ENCODE measurements at regions of chr12 and their contacts with region 1.

Region 1: GRCh38 chr12:121060149-121061001 is 21.3 kb upstream of the OASL start:
- DNase-seq: peak in 3 of 5 donors; percentile 37 to 50 (median 43)
- ATAC-seq: peak; percentile 65 to 95 (median 81)
- H3K4me3 ChIP-seq: peak overlapping the region in 10 of 12 donors; percentile 1 to 54 (median 40)
- H3K27ac ChIP-seq: peak overlapping the region; percentile 17 to 89 (median 70)
- H3K4me1 ChIP-seq: peaks cover 0 to 13% (median 3%) of the 10 kb centered on the region in 12 donors
- H3K27me3 ChIP-seq: no peaks in the 10 kb centered on the region
- CTCF ChIP-seq: peak; percentile 26 to 57 (median 44)
- POLR2A ChIP-seq: no peak

Region 2: GRCh38 chr12:120737557-120738251 is 322.7 kb before region 1 on chr12:
- intact Hi-C with region 1: no loop called
- DNase-seq: peak in 1 of 5 donors; percentile 21
- ATAC-seq: no peak
- H3K4me3 ChIP-seq: no peak overlapping the region
- H3K27ac ChIP-seq: no peak overlapping the region
- H3K4me1 ChIP-seq: no peaks in the 10 kb centered on the region
- H3K27me3 ChIP-seq: no peaks in the 10 kb centered on the region
- CTCF ChIP-seq: peak in 2 of 12 donors; percentile 13 to 21
- POLR2A ChIP-seq: no peak

Region 3: GRCh38 chr12:121095544-121096198 is 35.3 kb after region 1 on chr12:
- intact Hi-C with region 1: loop called (anchors 1 to 5 kb)
- DNase-seq: peak; percentile 51 to 89 (median 72)
- ATAC-seq: peak; percentile 58 to 94 (median 88)
- H3K4me3 ChIP-seq: peak overlapping the region in 10 of 12 donors; percentile 28 to 55 (median 42)
- H3K27ac ChIP-seq: peak overlapping the region in 1 of 12 donors; percentile 46
- H3K4me1 ChIP-seq: peaks cover 0 to 20% (median 9%) of the 10 kb centered on the region in 12 donors
- H3K27me3 ChIP-seq: no peaks in the 10 kb centered on the region
- CTCF ChIP-seq: peak; percentile 75 to 92 (median 85)
- POLR2A ChIP-seq: no peak

Region 4: DNA sequence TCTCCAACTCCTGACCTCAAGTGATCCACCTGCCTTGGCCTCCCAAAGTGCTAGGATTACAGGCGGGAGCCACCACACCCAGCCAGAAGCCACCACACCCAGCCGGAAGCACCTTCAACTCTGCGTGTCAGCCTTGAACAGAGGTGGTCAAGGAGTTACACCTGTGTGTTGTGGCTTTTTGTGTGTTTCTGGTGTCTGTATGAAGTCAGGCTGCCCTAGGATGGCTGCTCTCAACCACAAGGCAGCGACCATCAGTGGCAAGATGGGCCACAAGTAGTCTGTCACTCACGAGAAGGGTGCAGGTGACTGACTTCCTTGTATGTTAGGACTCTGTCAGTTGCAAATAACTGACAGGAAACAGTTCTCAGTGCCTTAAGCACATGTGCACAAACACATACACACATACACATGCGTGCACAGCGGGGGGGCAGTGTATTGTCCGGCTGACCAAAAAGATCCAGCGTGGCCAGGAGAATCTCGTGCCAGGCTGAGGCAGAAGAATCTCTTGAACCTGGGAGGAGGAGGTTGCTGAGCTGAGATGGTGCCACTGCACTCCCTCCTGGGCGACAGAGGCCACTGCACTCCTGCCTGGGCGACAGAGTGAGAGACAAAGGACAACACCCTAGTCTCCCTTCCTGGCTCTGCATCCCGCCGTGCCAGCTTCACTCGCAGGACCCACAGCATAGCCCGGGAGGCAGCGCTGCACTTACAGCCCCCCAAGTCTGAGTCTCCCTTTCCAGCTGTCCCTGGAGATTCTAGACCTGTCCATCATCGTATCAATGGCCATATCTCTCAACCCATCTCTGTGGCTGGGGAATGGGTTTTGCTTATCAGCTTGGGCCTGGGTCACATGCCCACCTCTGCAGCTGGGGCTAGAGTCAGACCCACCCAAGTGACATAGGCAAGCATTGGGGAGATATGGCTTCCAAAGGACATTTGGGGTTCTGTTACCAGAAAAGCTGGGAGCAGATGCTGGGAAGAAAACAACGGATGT is 163.2 kb after region 1 on chr12:
- intact Hi-C with region 1: loop called in 1 of 10 experiments (anchors 10 kb)
- DNase-seq: no peak
- ATAC-seq: no peak
- H3K4me3 ChIP-seq: no peak overlapping the region
- H3K27ac ChIP-seq: no peak overlapping the region
- H3K4me1 ChIP-seq: peaks cover 0 to 3% (median 0%) of the 10 kb centered on the region in 12 donors
- H3K27me3 ChIP-seq: no peaks in the 10 kb centered on the region
- CTCF ChIP-seq: no peak
- POLR2A ChIP-seq: no peak

Region 5: GRCh38 chr12:121232977-121233627 is 172.7 kb after region 1 on chr12:
- intact Hi-C with region 1: loop called in 2 of 10 experiments (anchors 5 to 10 kb)
- DNase-seq: no peak
- ATAC-seq: no peak
- H3K4me3 ChIP-seq: no peak overlapping the region
- H3K27ac ChIP-seq: no peak overlapping the region
- H3K4me1 ChIP-seq: peaks cover 0 to 7% (median 0%) of the 10 kb centered on the region in 12 donors
- H3K27me3 ChIP-seq: no peaks in the 10 kb centered on the region
- CTCF ChIP-seq: no peak
- POLR2A ChIP-seq: no peak

Measured in heart left ventricle (tissue), 16 donors.